ENCODE measurements at regions of chr6 and their contacts with region 1.

Region 1: GRCh38 chr6:41536795-41537758 is 9.1 kb upstream of the FOXP4 start:
- DNase-seq: peak; percentile 76 to 79
- H3K4me3 ChIP-seq: no peak overlapping the region
- H3K4me3 Mint-ChIP-seq: peak overlapping the region; percentile 39
- H3K27ac Mint-ChIP-seq: peak overlapping the region; percentile 86
- H3K4me1 ChIP-seq: peaks cover 45% of the 10 kb centered on the region
- H3K4me1 Mint-ChIP-seq: peaks cover 49% of the 10 kb centered on the region
- H3K27me3 ChIP-seq: no peaks in the 10 kb centered on the region
- H3K27me3 Mint-ChIP-seq: no peaks in the 10 kb centered on the region
- CTCF ChIP-seq: no peak

Region 2: GRCh38 chr6:41455818-41456217 is 81.3 kb before region 1 on chr6:
- CTCF ChIA-PET with region 1: no interaction called
- POLR2A ChIA-PET with region 1: no interaction called
- intact Hi-C with region 1: loop called (anchors 1 kb)
- DNase-seq: peak; percentile 40 to 68
- H3K4me3 ChIP-seq: no peak overlapping the region
- H3K4me3 Mint-ChIP-seq: peak overlapping the region; percentile 52
- H3K27ac Mint-ChIP-seq: peak overlapping the region; percentile 96
- H3K4me1 ChIP-seq: peaks cover 60% of the 10 kb centered on the region
- H3K4me1 Mint-ChIP-seq: peaks cover 37% of the 10 kb centered on the region
- H3K27me3 ChIP-seq: no peaks in the 10 kb centered on the region
- H3K27me3 Mint-ChIP-seq: no peaks in the 10 kb centered on the region
- CTCF ChIP-seq: no peak

Region 3: DNA sequence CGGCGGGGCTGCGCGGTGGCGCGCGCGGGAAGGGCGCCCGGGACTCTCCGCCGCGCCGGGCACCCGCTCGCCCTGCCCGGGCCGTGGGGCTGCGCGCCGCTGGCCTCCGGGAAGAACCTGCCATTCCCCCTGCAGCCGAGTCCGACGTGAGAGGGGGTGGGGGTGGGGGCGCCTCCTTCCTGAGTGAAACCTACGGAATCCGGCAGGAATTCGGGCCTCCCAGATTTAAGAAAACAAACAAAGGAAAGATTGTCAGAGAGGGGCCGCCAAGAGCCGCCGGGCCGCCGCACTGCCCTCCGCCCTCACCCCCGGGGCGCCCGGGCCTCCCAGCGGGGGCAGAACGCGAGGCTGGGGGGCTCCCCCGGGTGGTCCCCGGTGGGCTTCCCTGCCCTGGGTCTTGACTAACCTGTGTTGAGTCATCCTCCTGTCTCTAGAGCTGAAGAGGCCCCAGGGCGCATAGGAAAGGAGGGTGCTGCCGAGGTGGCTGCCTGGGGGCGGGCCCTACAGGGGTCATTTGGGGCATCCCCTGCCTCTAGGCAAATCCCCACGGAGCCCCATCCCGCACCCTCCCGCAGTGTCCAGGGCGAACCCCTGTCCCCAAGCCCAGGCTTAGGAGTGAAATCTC is 33.1 kb before region 1 on chr6:
- CTCF ChIA-PET with region 1: interaction called, 3 read pairs
- POLR2A ChIA-PET with region 1: no interaction called
- intact Hi-C with region 1: loop called (anchors 5 kb)
- DNase-seq: peak; percentile 74 to 86
- H3K4me3 ChIP-seq: peak overlapping the region; percentile 33
- H3K4me3 Mint-ChIP-seq: peak overlapping the region; percentile 61
- H3K27ac Mint-ChIP-seq: peak overlapping the region; percentile 88
- H3K4me1 ChIP-seq: peaks cover 36% of the 10 kb centered on the region
- H3K4me1 Mint-ChIP-seq: peaks cover 44% of the 10 kb centered on the region
- H3K27me3 ChIP-seq: no peaks in the 10 kb centered on the region
- H3K27me3 Mint-ChIP-seq: no peaks in the 10 kb centered on the region
- CTCF ChIP-seq: no peak

Region 4: GRCh38 chr6:41584668-41585205 is 47.7 kb after region 1 on chr6:
- CTCF ChIA-PET with region 1: interaction called, 10 read pairs
- POLR2A ChIA-PET with region 1: no interaction called
- intact Hi-C with region 1: no loop called
- DNase-seq: peak; percentile 88 to 91
- H3K4me3 ChIP-seq: no peak overlapping the region
- H3K4me3 Mint-ChIP-seq: peak overlapping the region; percentile 9
- H3K27ac Mint-ChIP-seq: peak overlapping the region; percentile 11
- H3K4me1 ChIP-seq: peaks cover 54% of the 10 kb centered on the region
- H3K4me1 Mint-ChIP-seq: peaks cover 28% of the 10 kb centered on the region
- H3K27me3 ChIP-seq: no peaks in the 10 kb centered on the region
- H3K27me3 Mint-ChIP-seq: no peaks in the 10 kb centered on the region
- CTCF ChIP-seq: no peak